OCI-LY7 (cell line): ENCODE measurements at regions of chr12 and their contacts with region 1.

Region 1: GRCh38 chr12:32627976-32628375 is 51.1 kb upstream of the DNM1L start:
- DNase-seq: no peak
- H3K4me3 ChIP-seq: no peak overlapping the region
- H3K27ac ChIP-seq: no peak overlapping the region
- H3K4me1 ChIP-seq: no peaks in the 10 kb centered on the region
- CTCF ChIP-seq: no peak

Region 2: DNA sequence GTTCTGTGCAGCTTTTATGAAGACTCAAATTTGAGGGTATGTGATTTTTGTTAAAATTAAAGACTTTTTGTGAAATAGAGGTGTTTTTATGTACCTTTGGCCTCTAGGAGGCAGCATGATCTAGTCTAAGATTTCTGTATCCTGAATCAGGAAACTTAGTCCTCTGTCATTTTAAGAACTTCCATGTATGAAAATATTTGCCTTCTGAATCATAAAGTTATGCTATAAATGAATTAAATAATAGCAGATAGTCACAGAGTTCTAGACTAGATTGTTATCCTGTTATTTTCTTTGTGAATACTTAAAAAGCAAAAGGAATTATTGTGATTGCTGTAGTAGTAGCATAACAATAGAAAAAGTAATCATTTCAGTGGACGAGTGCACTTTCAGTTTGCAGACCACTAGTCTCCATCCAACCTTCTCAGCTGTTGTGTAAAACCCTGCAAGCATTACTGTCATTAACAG is 172.3 kb before region 1 on chr12:
- CTCF ChIA-PET with region 1: no interaction called
- POLR2A ChIA-PET with region 1: no interaction called
- intact Hi-C with region 1: no loop called
- DNase-seq: peak; percentile 91
- H3K4me3 ChIP-seq: peak overlapping the region; percentile 67
- H3K27ac ChIP-seq: peak overlapping the region; percentile 73
- H3K4me1 ChIP-seq: peaks cover 24% of the 10 kb centered on the region
- CTCF ChIP-seq: peak; percentile 98

Region 3: GRCh38 chr12:32651956-32652210 is 23.9 kb after region 1 on chr12:
- CTCF ChIA-PET with region 1: no interaction called
- POLR2A ChIA-PET with region 1: interaction called, 3 read pairs
- intact Hi-C with region 1: loop called (anchors 1 kb)
- DNase-seq: no peak
- H3K4me3 ChIP-seq: no peak overlapping the region
- H3K27ac ChIP-seq: no peak overlapping the region
- H3K4me1 ChIP-seq: no peaks in the 10 kb centered on the region
- CTCF ChIP-seq: no peak

Region 4: GRCh38 chr12:32718926-32719325 is 91.0 kb after region 1 on chr12:
- CTCF ChIA-PET with region 1: no interaction called
- POLR2A ChIA-PET with region 1: no interaction called
- intact Hi-C with region 1: no loop called
- DNase-seq: no peak
- H3K4me3 ChIP-seq: no peak overlapping the region
- H3K27ac ChIP-seq: no peak overlapping the region
- H3K4me1 ChIP-seq: no peaks in the 10 kb centered on the region
- CTCF ChIP-seq: no peak